K562 (cell line): ENCODE measurements at regions of chr1 and their contacts with region 1.

Region 1: DNA sequence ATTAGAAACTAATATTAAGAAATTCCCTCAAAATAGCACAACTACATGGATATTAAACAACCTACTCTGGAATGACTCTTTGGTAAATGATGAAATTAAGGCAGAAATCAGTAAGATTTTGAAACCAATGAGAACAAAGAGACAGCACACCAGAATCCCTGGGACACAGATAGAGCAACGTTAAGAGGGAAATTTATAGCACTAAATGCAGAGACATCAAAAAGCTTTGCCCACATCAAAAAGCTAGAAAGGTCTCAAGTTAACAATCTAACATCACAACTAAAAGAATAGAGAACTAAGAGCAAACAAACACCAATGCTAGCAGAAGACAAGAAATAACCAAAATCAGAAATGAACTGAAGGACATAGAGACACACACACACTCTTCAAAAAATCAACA is 48.6 kb upstream of the LRRC8B start:
- DNase-seq: no peak
- ATAC-seq: no peak
- H3K4me3 ChIP-seq: no peak overlapping the region
- H3K27ac ChIP-seq: no peak overlapping the region
- H3K4me1 ChIP-seq: no peaks in the 10 kb centered on the region
- H3K27me3 ChIP-seq: no peaks in the 10 kb centered on the region
- CTCF ChIP-seq: no peak
- EP300 ChIP-seq: no peak
- POLR2A ChIP-seq: no peak
- RAD21 ChIP-seq: no peak

Region 2: GRCh38 chr1:89524369-89525168 is 48.5 kb after region 1 on chr1 and contains the start of gene LRRC8B:
- CTCF ChIA-PET with region 1: no interaction called
- POLR2A ChIA-PET with region 1: no interaction called
- in situ Hi-C with region 1: no loop called
- intact Hi-C with region 1: no loop called
- DNase-seq: peak; percentile 90 to 94 (median 92)
- ATAC-seq: peak; percentile 94
- H3K4me3 ChIP-seq: peak within 1 kb of the TSS; percentile 94
- H3K27ac ChIP-seq: peak within 1 kb of the TSS; percentile 98
- H3K4me1 ChIP-seq: peaks cover 17 to 32% of the 10 kb centered on the region in 2 experiments
- H3K27me3 ChIP-seq: no peaks in the 10 kb centered on the region
- CTCF ChIP-seq: no peak
- EP300 ChIP-seq: no peak
- POLR2A ChIP-seq: peak; percentile 94
- RAD21 ChIP-seq: no peak
- polyA plus RNA-seq, gene LRRC8B: 4.3 to 5.7 TPM

Region 3: DNA sequence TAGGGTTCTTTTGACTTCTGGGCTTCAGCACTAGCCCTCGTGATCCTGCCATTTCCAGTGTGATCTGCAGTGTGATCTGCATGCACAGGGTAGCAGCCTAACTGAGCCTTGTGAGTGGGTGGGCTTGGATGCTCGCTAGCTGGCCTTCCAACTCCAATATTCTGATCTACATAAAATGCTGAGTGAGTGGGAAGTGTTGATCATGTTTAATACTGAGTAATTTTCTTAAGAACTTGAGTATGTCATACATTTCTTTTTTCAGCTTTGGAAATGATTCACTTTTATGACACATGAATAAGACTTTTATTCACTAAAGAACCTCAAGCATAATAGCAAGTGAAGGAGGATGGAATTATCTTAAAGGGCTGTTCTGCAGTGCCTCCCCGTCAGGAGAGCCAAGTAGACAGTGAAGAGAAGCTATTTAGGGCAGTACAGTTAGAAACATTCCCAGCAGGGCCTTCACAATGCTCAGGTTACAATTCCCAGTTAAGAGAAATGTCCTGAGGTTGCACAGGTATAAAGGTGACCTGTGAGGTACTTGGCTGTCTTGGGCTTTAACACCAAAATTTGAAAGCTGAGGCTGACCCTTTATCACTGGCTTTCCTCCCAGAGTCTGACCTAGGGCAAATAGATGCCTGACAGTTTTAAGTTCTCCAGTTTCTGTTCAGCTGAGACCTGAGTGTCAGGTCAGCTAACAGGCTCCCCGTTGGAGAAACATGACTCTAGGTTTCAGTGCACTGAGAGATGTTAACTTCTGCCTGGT is 127.8 kb after region 1 on chr1:
- CTCF ChIA-PET with region 1: no interaction called
- POLR2A ChIA-PET with region 1: no interaction called
- in situ Hi-C with region 1: loop called (anchors 5 kb)
- intact Hi-C with region 1: no loop called
- DNase-seq: no peak
- ATAC-seq: no peak; the same call in 2 of the 3 replicates
- H3K4me3 ChIP-seq: no peak overlapping the region
- H3K27ac ChIP-seq: no peak overlapping the region
- H3K4me1 ChIP-seq: peaks cover under 1 to 12% of the 10 kb centered on the region in 2 experiments
- H3K27me3 ChIP-seq: no peaks in the 10 kb centered on the region
- CTCF ChIP-seq: no peak
- EP300 ChIP-seq: no peak
- POLR2A ChIP-seq: no peak
- RAD21 ChIP-seq: no peak